Gastrocnemius medialis (tissue), 4 donors: ENCODE measurements at regions of chr6 and their contacts with region 1.

Region 1: GRCh38 chr6:106556368-106556960 is 72.8 kb downstream of the RTN4IP1 start:
- DNase-seq: no peak
- ATAC-seq: no peak
- H3K4me3 ChIP-seq: no peak overlapping the region
- H3K27ac ChIP-seq: no peak overlapping the region
- H3K4me1 ChIP-seq: no peaks in the 10 kb centered on the region
- H3K27me3 ChIP-seq: no peaks in the 10 kb centered on the region
- CTCF ChIP-seq: no peak
- POLR2A ChIP-seq: no peak

Region 2: GRCh38 chr6:105431226-105431625 is 1125.2 kb before region 1 on chr6:
- in situ Hi-C with region 1: loop called in 3 of 4 experiments (anchors 25 kb)
- intact Hi-C with region 1: no loop called
- DNase-seq: no peak
- ATAC-seq: no peak
- H3K4me3 ChIP-seq: no peak overlapping the region
- H3K27ac ChIP-seq: no peak overlapping the region
- H3K4me1 ChIP-seq: no peaks in the 10 kb centered on the region
- H3K27me3 ChIP-seq: no peaks in the 10 kb centered on the region
- CTCF ChIP-seq: peak in 4 of 5 experiments; percentile 10 to 47 (median 28)
- POLR2A ChIP-seq: no peak

Region 3: GRCh38 chr6:106325336-106326178 is 230.9 kb before region 1 on chr6 and contains the start of gene ATG5:
- in situ Hi-C with region 1: loop called in 3 of 4 experiments (anchors 10 to 25 kb)
- intact Hi-C with region 1: no loop called
- DNase-seq: peak; percentile 96 to 99
- ATAC-seq: peak; percentile 97
- H3K4me3 ChIP-seq: peak within 1 kb of the TSS; percentile 71 to 90 (median 83)
- H3K27ac ChIP-seq: peak within 1 kb of the TSS; percentile 86 to 93 (median 89)
- H3K4me1 ChIP-seq: peaks cover 13 to 23% of the 10 kb centered on the region in 2 donors
- H3K27me3 ChIP-seq: no peaks in the 10 kb centered on the region
- CTCF ChIP-seq: no peak
- POLR2A ChIP-seq: peak; percentile 64 to 74
- total RNA-seq, gene ATG5: 18.9 to 22.3 (median 20.1) TPM

Region 4: GRCh38 chr6:106339334-106340029 is 217.0 kb before region 1 on chr6:
- in situ Hi-C with region 1: loop called (anchors 10 to 25 kb)
- intact Hi-C with region 1: no loop called
- DNase-seq: peak in 1 of 2 donors; percentile 19
- ATAC-seq: peak; percentile 52 to 80
- H3K4me3 ChIP-seq: no peak overlapping the region
- H3K27ac ChIP-seq: no peak overlapping the region
- H3K4me1 ChIP-seq: no peaks in the 10 kb centered on the region
- H3K27me3 ChIP-seq: no peaks in the 10 kb centered on the region
- CTCF ChIP-seq: peak in 3 of 5 experiments; percentile 36 to 61 (median 41)
- POLR2A ChIP-seq: no peak

Region 5: DNA sequence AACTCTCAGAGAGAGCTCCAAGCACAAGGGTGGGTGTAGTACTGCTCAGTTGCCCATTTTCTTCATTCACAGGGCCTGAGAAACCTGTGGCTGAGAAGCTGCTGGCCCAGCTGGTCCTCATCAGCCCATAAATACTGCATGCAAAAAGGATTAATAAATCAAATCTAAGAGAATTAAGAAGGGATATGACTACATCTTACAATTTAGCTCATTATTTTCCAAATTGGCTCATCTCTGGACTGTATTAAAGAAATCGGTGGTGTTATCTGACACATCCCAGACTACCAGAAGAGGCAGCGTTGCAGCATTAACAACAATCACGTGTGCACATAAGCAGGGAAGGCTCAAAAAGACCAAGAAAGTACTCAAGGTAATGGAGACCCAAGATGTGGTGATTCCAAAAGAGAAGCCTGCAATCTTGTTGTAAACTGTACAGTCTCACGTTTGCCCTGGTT is 327.4 kb after region 1 on chr6:
- in situ Hi-C with region 1: no loop called
- intact Hi-C with region 1: no loop called
- DNase-seq: no peak
- ATAC-seq: no peak
- H3K4me3 ChIP-seq: no peak overlapping the region
- H3K27ac ChIP-seq: no peak overlapping the region
- H3K4me1 ChIP-seq: no peaks in the 10 kb centered on the region
- H3K27me3 ChIP-seq: no peaks in the 10 kb centered on the region
- CTCF ChIP-seq: no peak
- POLR2A ChIP-seq: no peak